Right ventricle myocardium inferior (tissue), 1 donor: ENCODE measurements at regions of chrX and their contacts with region 1.

Region 1: DNA sequence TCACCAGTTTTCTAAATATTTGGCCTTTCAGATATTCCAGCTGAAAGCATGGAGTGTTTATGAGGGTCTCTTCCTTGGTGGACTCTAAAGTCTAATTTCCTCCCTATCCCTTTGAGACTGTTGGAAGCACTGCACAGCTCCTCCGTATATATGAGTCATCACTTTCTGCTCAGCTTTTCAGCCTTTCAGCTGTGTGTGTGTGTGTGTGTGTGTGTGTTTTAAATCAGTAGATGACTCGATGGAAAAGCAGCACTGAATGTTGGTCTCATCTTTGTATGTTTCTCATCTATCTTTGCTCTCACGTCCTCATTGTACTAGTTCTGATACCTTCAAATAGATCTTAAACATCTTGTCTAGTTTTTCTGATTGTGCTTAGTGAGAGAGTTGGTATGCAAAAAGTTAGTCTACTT is 81.6 kb downstream of the ZFX start:
- DNase-seq: no peak
- ATAC-seq: no peak

Region 2: DNA sequence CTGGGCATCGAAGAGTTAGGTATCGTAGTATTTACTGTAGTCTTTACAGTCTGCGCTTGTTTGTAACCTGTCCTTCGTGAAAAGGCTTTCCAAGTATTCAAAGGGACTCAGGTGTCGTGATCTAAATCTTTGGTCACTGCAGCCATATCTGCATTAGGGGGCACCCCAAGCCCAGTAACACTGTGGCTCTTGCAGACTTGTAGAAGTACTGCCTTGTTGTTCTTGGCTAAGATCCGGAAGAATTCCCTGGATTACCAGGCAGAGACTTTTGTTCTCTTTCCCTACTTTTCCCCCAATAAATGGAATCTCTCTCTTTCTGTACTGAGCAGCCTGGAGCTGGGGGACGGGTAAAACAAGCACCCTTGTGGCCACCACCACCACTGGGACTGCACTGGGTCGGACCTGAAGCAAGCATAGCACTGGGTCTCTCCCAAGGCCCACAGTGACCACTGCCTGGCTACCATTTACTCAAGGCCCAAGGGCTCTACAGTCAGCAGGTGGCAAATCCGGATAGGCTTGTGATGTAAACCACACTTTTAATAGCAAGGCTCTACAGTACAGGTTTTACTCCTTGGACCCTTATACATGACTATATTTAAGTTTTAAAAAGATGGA is 311.3 kb before region 1 on chrX:
- intact Hi-C with region 1: loop called (anchors 10 kb)
- DNase-seq: no peak
- ATAC-seq: no peak